Activated B cell treated with CpG ODN at 0.5 μM for 24 hours (primary cell): ENCODE measurements at regions of chr17 and their contacts with region 1.

Region 1: GRCh38 chr17:68291844-68292695 is 775 bp downstream of the ARSG start:
- DNase-seq: peak; percentile 86
- ATAC-seq: peak; percentile 74
- H3K4me3 Mint-ChIP-seq: peak overlapping the region; percentile 84
- H3K27ac Mint-ChIP-seq: peak overlapping the region; percentile 83
- H3K4me1 Mint-ChIP-seq: peaks cover 45% of the 10 kb centered on the region
- H3K27me3 Mint-ChIP-seq: no peaks in the 10 kb centered on the region
- CTCF ChIP-seq: no peak

Region 2: GRCh38 chr17:68035523-68036303 is 256.4 kb before region 1 on chr17 and contains the start of gene KPNA2:
- CTCF ChIA-PET with region 1: no interaction called
- POLR2A ChIA-PET with region 1: no interaction called
- intact Hi-C with region 1: loop called (anchors 1 kb)
- DNase-seq: peak; percentile 80
- ATAC-seq: peak; percentile 89
- H3K4me3 Mint-ChIP-seq: peak within 1 kb of the TSS; percentile 93
- H3K27ac Mint-ChIP-seq: peak within 1 kb of the TSS; percentile 92
- H3K4me1 Mint-ChIP-seq: peaks cover 11% of the 10 kb centered on the region
- H3K27me3 Mint-ChIP-seq: no peaks in the 10 kb centered on the region
- CTCF ChIP-seq: no peak
- total RNA-seq, gene KPNA2: 49.5 and 49.9 TPM in 2 replicates

Region 3: DNA sequence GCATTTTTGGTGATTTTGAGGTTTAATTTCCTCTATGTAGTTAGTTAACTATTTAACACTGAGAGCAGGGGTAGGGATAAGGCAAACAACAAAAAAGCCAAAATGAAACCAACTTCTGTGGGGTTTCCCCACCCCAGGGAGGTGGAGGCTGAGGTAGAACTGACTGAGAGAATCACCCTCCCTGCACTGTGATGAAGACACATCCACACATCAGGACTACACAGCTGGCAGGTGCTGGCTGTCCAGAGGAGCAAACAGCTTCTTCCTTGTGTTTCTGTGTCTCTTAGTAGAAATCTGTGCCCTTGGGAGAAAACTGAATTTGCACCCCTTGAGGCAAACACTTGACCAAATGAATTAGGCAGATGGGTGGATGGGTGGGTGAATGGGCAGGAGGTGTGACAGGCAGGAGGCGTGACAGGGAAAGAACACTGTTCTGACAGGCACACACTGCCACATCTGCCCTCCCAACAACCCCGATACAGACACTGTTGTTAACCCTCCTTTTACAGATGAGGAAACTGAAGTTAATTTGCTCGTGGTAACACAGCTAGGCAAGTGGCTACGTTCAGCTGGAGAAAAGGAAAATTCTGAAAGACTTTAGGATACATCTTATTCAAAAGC is 107.1 kb before region 1 on chr17:
- CTCF ChIA-PET with region 1: interaction called, 4 read pairs
- POLR2A ChIA-PET with region 1: interaction called, 28 read pairs
- intact Hi-C with region 1: loop called (anchors 1 kb)
- DNase-seq: no peak
- ATAC-seq: peak; percentile 69
- H3K4me3 Mint-ChIP-seq: peak overlapping the region; percentile 62
- H3K27ac Mint-ChIP-seq: peak overlapping the region; percentile 91
- H3K4me1 Mint-ChIP-seq: peaks cover 66% of the 10 kb centered on the region
- H3K27me3 Mint-ChIP-seq: no peaks in the 10 kb centered on the region
- CTCF ChIP-seq: no peak

Region 4: DNA sequence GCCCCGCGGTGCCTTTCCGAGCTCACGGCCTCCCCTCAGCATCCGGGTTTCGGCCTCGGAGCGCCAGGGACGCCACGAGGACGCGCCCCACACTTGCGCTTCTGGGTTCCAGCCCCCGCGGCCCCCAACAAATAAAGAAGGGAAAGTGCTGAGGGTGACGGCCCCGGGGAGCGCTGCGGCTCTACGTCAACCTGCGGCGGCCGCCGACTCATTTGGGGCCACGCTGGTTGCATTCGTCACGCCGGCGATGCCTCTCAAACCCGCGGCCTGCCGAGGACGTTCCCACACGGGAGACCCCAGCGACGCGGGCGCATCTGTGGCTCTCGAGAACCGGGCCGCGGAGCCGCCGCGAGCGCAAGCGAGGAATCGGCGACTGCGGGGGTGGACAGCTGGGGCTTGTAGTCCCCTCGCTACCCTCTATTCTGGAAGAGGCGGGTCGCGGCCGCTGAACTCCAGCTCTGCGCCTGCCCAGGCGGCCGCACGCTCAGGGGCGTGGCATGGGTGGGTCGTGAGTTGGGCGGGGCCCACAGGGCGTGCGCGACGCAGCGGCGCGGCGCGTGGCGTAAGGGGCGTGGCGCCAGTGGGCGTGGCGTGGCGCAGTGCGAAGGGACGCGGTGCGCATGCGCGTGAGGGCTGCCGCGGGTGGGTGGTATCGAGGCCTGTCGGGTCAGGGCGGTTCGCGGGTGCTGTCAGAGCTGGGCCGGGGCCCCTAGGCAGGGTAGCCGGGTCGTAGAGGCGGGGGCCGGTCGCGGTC is 44.4 kb before region 1 on chr17 and contains the start of gene AMZ2:
- CTCF ChIA-PET with region 1: no interaction called
- POLR2A ChIA-PET with region 1: interaction called, 84 read pairs
- intact Hi-C with region 1: loop called (anchors 1 kb)
- DNase-seq: peak; percentile 100
- ATAC-seq: peak; percentile 87
- H3K4me3 Mint-ChIP-seq: peak within 1 kb of the TSS; percentile 92
- H3K27ac Mint-ChIP-seq: peak within 1 kb of the TSS; percentile 95
- H3K4me1 Mint-ChIP-seq: peaks cover 53% of the 10 kb centered on the region
- H3K27me3 Mint-ChIP-seq: no peaks in the 10 kb centered on the region
- CTCF ChIP-seq: no peak
- total RNA-seq, gene AMZ2: 42.1 and 55.4 TPM in 2 replicates

Region 5: DNA sequence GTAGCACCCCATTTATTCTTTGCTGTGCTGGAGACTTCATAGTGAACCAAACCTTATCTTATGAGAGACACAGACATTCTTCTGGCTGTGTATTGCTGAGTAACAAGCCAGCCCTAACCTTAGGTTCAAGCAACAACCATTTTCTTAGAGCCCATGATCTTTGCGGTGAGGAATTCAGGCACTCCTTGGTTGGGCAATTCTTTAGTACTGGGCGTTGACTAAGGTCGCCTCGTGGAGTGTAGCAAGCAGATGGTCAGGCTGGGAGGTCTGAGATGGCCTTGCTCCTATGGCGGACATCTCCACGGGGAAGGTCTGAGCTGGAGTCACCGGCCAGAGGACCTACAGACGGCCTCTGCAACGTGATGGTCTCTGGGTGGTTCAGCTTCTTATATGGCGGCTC is 42.3 kb after region 1 on chr17:
- CTCF ChIA-PET with region 1: no interaction called
- POLR2A ChIA-PET with region 1: no interaction called
- intact Hi-C with region 1: no loop called
- DNase-seq: no peak
- ATAC-seq: no peak
- H3K4me3 Mint-ChIP-seq: no peak overlapping the region
- H3K27ac Mint-ChIP-seq: no peak overlapping the region
- H3K4me1 Mint-ChIP-seq: no peaks in the 10 kb centered on the region
- H3K27me3 Mint-ChIP-seq: no peaks in the 10 kb centered on the region
- CTCF ChIP-seq: no peak

Region 6: DNA sequence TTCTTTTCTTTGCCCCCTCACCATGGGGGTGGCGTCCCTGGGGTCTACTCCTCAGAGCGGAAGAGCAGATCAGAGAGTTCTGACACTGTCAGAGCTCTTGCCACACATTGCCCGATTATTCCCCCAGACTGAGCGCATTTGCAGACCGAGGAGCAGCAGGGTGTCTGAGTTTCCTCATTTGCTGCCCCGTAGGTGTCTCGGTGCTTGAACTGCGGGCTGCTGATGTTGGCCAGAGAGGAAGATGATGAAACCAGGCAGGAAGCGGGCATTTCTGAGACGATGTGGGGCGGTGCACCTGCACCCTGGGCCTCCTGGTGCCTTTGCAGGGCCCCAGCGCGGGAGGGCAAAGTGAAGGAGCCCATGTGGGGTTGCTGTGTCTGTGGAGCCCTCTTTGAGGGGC is 54.4 kb after region 1 on chr17:
- CTCF ChIA-PET with region 1: no interaction called
- POLR2A ChIA-PET with region 1: interaction called, 40 read pairs
- intact Hi-C with region 1: loop called (anchors 1 kb)
- DNase-seq: peak; percentile 53
- ATAC-seq: peak; percentile 94
- H3K4me3 Mint-ChIP-seq: peak overlapping the region; percentile 81
- H3K27ac Mint-ChIP-seq: peak overlapping the region; percentile 94
- H3K4me1 Mint-ChIP-seq: peaks cover 38% of the 10 kb centered on the region
- H3K27me3 Mint-ChIP-seq: peaks cover 5% of the 10 kb centered on the region
- CTCF ChIP-seq: no peak

Region 7: DNA sequence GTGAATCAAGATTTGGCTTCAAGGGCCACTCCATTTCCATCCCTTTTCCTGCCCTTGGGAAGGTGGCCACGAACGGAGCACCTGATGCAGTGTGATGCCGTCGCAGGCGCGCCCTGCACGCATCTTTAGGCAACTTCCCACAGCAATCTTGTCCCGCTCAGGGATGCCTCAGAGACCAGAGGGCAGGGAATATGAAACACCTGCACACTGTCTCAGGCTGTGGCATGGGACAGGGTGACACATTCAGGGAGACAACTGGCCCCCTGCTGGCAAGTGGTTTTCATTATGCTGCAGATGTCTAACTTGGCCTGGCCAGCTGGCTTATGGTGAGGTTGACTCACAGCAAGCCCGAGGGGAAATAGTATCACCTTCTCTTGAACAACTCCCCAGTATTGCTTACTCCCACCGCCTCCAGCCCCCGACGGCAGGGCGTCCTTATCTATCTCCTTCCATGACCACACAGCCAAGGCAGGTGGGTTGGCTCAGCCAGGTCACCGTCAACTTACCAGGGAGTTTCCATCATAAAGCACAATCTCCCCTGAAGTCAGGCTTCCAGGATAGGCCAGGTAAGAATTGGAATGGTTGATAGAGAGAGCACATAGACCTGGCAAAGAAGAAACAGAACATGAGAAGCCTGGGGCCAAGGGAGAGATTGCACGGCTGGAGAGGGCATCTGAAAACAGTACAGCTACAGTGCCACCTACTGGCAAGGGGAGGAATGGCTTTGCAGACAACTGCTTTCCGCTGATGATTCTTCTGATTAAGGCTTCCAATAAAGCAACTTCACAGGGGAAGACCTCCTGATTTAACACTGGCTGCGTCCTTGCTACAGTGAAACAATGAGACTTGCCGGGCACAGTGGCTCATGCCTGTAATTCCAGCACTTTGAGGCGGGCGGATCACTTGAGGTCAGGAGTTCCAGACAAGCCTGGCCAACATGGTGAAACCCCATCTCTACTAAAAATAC is 144.1 kb after region 1 on chr17:
- CTCF ChIA-PET with region 1: interaction called, 4 read pairs
- POLR2A ChIA-PET with region 1: interaction called, 12 read pairs
- intact Hi-C with region 1: loop called (anchors 1 kb)
- DNase-seq: peak; percentile 60
- ATAC-seq: peak; percentile 78
- H3K4me3 Mint-ChIP-seq: no peak overlapping the region
- H3K27ac Mint-ChIP-seq: peak overlapping the region; percentile 54
- H3K4me1 Mint-ChIP-seq: peaks cover 50% of the 10 kb centered on the region
- H3K27me3 Mint-ChIP-seq: no peaks in the 10 kb centered on the region
- CTCF ChIP-seq: peak; percentile 61

Region 8: GRCh38 chr17:68512247-68512982 is 220.3 kb after region 1 on chr17 and contains the start of gene PRKAR1A:
- CTCF ChIA-PET with region 1: no interaction called
- POLR2A ChIA-PET with region 1: interaction called, 6 read pairs
- intact Hi-C with region 1: loop called (anchors 2 kb)
- DNase-seq: peak; percentile 92
- ATAC-seq: peak; percentile 77
- H3K4me3 Mint-ChIP-seq: peak within 1 kb of the TSS; percentile 100
- H3K27ac Mint-ChIP-seq: peak within 1 kb of the TSS; percentile 100
- H3K4me1 Mint-ChIP-seq: peaks cover 39% of the 10 kb centered on the region
- H3K27me3 Mint-ChIP-seq: no peaks in the 10 kb centered on the region
- CTCF ChIP-seq: no peak
- total RNA-seq, gene PRKAR1A: 272 and 279 TPM in 2 replicates